Esophagus muscularis mucosa (tissue), 4 donors: ENCODE measurements at regions of chr20 and their contacts with region 1.

Region 1: GRCh38 chr20:24825591-24825990 is 123.5 kb upstream of the CST7 start:
- DNase-seq: no peak
- H3K4me3 ChIP-seq: no peak overlapping the region
- H3K27ac ChIP-seq: no peak overlapping the region
- H3K4me1 ChIP-seq: no peaks in the 10 kb centered on the region
- H3K27me3 ChIP-seq: no peaks in the 10 kb centered on the region
- CTCF ChIP-seq: no peak
- EP300 ChIP-seq: no peak
- POLR2A ChIP-seq: no peak

Region 2: GRCh38 chr20:24559114-24559698 is 266.4 kb before region 1 on chr20:
- intact Hi-C with region 1: loop called (anchors 5 kb)
- DNase-seq: no peak
- H3K4me3 ChIP-seq: no peak overlapping the region
- H3K27ac ChIP-seq: no peak overlapping the region
- H3K4me1 ChIP-seq: no peaks in the 10 kb centered on the region
- H3K27me3 ChIP-seq: no peaks in the 10 kb centered on the region
- CTCF ChIP-seq: no peak
- EP300 ChIP-seq: no peak
- POLR2A ChIP-seq: no peak

Region 3: DNA sequence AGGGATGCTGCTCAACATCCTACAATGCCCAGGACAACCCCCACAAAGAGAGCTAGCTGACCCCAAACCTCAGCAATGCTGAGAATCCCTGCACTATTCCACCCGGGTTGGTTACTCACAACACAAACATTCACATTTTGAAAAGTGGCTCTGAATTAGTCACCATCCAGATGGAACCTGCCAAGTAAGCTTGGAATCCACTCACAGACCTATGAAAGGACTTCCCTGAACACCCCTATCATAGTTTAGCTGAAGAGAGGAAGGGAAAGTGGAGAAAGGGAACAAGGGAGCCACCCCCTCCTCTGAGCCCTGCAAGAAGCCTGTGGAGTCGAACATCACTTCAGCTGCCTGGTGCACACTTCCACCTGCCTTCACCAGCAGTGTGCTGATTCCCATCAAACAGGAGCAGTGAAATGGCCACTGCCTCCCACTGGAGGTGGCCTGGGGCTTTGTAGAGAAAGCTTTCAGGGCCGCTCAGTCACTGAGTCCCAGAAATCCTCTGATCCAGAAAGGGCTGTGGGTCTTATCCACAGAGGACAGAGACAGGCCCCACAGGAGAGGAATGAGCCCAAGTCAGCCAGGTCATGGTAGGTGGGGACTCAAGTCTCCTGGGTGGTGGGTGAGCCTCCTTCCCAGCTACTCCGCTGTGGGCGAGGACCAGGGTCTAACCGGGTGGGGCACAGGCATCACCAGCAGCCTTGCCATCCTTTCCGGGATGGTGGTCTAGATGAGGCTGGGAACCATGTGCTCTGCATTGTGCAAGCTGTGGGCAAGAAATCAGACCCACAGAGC is 152.5 kb before region 1 on chr20:
- intact Hi-C with region 1: no loop called
- DNase-seq: no peak
- H3K4me3 ChIP-seq: no peak overlapping the region
- H3K27ac ChIP-seq: no peak overlapping the region
- H3K4me1 ChIP-seq: peaks cover 0 to 6% (median 0%) of the 10 kb centered on the region in 4 donors
- H3K27me3 ChIP-seq: no peaks in the 10 kb centered on the region
- CTCF ChIP-seq: no peak
- EP300 ChIP-seq: no peak
- POLR2A ChIP-seq: no peak

Region 4: DNA sequence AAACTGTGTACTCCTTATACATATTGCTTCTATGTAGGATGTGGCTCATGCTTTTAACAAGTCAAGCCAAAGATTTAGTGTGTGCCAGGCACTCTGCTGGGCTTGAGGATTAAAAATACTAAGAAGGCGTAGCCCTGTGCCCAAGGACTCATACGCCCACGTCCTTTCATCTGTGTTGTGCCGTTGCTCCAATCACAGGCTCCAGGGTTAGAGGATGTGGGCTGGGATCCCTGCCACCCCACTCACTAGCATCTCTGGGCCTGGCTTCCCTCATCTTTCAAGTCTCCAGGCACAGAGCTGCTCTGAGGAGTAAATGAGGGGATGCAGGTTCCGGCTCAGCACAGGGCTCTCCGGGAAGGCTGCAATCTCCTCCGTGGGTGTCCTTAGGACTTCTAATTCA is 141.9 kb before region 1 on chr20:
- intact Hi-C with region 1: no loop called
- DNase-seq: no peak
- H3K4me3 ChIP-seq: no peak overlapping the region
- H3K27ac ChIP-seq: no peak overlapping the region
- H3K4me1 ChIP-seq: no peaks in the 10 kb centered on the region
- H3K27me3 ChIP-seq: no peaks in the 10 kb centered on the region
- CTCF ChIP-seq: no peak
- EP300 ChIP-seq: no peak
- POLR2A ChIP-seq: no peak

Region 5: DNA sequence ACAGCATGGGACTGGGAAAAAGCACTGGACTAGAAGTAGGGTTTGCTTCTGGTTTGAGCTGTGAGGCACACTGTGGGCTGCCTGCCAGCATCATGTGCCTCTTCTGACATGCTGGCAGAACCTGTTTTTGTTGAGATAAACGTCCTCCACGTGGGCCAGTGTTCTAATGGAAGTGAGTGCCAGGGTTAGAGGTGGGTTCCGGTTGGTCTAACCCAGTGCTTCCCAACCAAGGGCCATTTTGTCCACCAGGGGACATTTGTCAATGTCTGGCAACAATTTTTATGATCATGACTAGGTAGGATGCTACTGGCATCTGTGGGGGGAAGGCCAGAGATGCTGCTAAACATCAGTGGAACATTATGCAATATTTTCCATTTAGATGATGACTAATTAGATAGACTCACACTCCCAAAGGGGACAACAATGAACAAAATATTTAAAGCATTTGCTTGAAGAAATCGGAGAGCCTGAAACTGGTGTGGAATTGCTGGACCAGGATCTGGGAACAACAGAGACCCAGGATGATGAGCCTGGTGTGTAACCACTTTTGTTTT is 174.8 kb after region 1 on chr20:
- intact Hi-C with region 1: no loop called
- DNase-seq: no peak
- H3K4me3 ChIP-seq: no peak overlapping the region
- H3K27ac ChIP-seq: peak overlapping the region in 3 of 4 donors; percentile 42 to 61 (median 51)
- H3K4me1 ChIP-seq: peaks cover 29 to 52% (median 45%) of the 10 kb centered on the region in 4 donors
- H3K27me3 ChIP-seq: no peaks in the 10 kb centered on the region
- CTCF ChIP-seq: peak in 1 of 3 experiments; percentile 16
- EP300 ChIP-seq: no peak
- POLR2A ChIP-seq: no peak